ENCODE measurements at regions of chr17 and their contacts with region 1.

Region 1: GRCh38 chr17:51014129-51014528 is 106.5 kb downstream of the SPAG9 start:
- DNase-seq: no peak
- ATAC-seq: no peak
- H3K4me3 ChIP-seq: no peak overlapping the region
- H3K27ac ChIP-seq: no peak overlapping the region
- H3K4me1 ChIP-seq: no peaks in the 10 kb centered on the region
- H3K27me3 ChIP-seq: no peaks in the 10 kb centered on the region
- CTCF ChIP-seq: no peak
- POLR2A ChIP-seq: no peak
- RAD21 ChIP-seq: no peak

Region 2: DNA sequence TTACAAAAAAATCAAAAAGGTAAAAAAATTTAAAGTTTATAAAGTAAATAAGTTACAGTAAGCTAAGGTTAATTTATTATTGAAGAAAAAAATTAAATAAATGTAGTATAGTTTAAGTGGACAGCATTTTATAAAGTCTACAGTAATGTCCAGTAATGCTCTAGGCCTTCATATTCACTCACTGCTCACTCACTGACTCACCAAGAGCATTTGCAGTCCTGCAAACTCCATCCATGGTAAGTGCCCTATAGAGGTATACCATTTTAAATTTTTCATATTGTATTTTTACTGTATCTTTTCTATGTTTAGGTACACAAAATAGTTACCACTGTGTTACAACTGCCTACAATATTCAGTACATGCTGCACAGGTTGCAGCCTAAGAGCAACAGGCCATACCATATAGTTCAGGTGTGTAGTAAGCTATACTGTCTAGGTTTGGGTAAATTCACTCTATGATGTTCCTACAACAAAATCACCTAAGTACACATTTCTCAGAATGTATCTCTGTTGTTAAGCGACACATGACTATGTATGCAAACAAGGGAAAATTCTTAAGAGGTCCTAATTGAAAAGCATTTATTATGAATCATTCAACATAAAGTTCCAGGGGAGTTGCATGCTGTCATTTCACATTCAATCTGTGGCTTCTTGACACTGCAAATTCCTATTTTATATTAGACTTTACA is 14.2 kb after region 1 on chr17:
- CTCF ChIA-PET with region 1: no interaction called
- POLR2A ChIA-PET with region 1: interaction called, 14 read pairs
- dilution Hi-C with region 1: no loop called
- in situ Hi-C with region 1: no loop called
- intact Hi-C with region 1: no loop called
- DNase-seq: peak; percentile 17
- ATAC-seq: no peak
- H3K4me3 ChIP-seq: no peak overlapping the region
- H3K27ac ChIP-seq: no peak overlapping the region
- H3K4me1 ChIP-seq: no peaks in the 10 kb centered on the region
- H3K27me3 ChIP-seq: no peaks in the 10 kb centered on the region
- CTCF ChIP-seq: no peak
- POLR2A ChIP-seq: no peak
- RAD21 ChIP-seq: no peak

Measured in IMR-90 (cell line).